ENCODE measurements at regions of chr10 and their contacts with region 1.

Region 1: GRCh38 chr10:114043532-114044246 is at the start of gene ADRB1:
- DNase-seq: peak in 8 of 14 experiments; percentile 7 to 61 (median 34)
- ATAC-seq: peak; percentile 39
- H3K4me3 ChIP-seq: peak within 1 kb of the TSS; percentile 29
- H3K4me3 Mint-ChIP-seq: peak within 1 kb of the TSS; percentile 78
- H3K27ac ChIP-seq: no peak within 1 kb of the TSS
- H3K27ac Mint-ChIP-seq: no peak within 1 kb of the TSS
- H3K4me1 ChIP-seq: peaks cover 23% of the 10 kb centered on the region
- H3K4me1 Mint-ChIP-seq: peaks cover 7% of the 10 kb centered on the region
- H3K27me3 ChIP-seq: peaks cover 36 to 62% of the 10 kb centered on the region in 2 experiments
- H3K27me3 Mint-ChIP-seq: peaks cover 72% of the 10 kb centered on the region
- CTCF ChIP-seq: no peak
- total RNA-seq, gene ADRB1: 0.08 to 0.11 TPM

Region 2: DNA sequence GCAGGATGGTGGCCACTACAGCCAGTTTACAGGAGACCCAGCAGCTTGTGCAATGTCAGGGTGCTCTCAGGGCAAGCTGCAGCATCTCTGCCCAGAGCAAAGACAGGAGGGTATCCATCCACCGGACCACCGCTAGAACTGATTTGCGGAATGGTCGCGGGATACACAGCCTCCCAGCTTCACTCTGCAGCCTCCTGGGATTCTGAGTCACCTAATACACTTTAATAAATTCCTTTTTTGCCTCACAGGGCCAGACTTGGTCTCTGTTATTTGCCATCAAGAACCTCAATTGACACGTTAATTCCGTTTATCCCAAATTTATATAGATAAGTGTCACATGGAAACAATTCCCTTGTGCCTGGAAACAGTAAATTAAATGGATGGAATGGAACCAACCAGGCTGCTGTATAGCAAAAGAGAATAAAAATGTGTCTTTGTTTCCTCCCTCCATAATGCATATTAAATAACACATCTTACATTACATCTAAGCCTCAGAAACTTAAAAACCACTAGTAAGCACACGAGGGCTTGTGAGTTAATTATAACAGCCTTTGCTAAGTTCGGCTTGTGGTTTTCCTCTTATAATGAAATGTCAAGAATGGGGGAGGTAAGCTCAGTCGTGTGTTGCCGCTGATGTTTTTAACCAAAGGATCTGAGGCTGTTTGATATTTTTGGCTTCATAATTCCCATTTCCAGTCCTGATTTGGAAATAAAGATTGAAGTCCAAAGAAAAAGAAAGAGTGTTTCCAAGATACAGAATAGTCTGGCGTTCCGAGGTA is 52.1 kb after region 1 on chr10:
- CTCF ChIA-PET with region 1: no interaction called
- POLR2A ChIA-PET with region 1: no interaction called
- intact Hi-C with region 1: loop called in 1 of 2 experiments (anchors 5 kb)
- DNase-seq: peak in 1 of 14 experiments; percentile 54
- ATAC-seq: peak; percentile 48
- H3K4me3 ChIP-seq: no peak overlapping the region
- H3K4me3 Mint-ChIP-seq: peak overlapping the region; percentile 39
- H3K27ac ChIP-seq: no peak overlapping the region
- H3K27ac Mint-ChIP-seq: no peak overlapping the region
- H3K4me1 ChIP-seq: peaks cover 26% of the 10 kb centered on the region
- H3K4me1 Mint-ChIP-seq: peaks cover 46% of the 10 kb centered on the region
- H3K27me3 ChIP-seq: peaks cover 4 to 6% of the 10 kb centered on the region in 2 experiments
- H3K27me3 Mint-ChIP-seq: peaks cover 21% of the 10 kb centered on the region
- CTCF ChIP-seq: no peak